Activated T-helper 1 cell treated with anti-CD3 and anti-CD28 coated beads, Interleukin-12 subunit alpha, Interleukin-12 subunit beta, Interleukin-2, Interleukin-4 antibody, amounts not matched to agents 30 ng/mL and 10 ng/mL and 1 ng/mL, durations not matched to agents 14 hours and 24 hours and 36 hours (primary cell): ENCODE measurements at regions of chr9 and their contacts with region 1.

Region 1: DNA sequence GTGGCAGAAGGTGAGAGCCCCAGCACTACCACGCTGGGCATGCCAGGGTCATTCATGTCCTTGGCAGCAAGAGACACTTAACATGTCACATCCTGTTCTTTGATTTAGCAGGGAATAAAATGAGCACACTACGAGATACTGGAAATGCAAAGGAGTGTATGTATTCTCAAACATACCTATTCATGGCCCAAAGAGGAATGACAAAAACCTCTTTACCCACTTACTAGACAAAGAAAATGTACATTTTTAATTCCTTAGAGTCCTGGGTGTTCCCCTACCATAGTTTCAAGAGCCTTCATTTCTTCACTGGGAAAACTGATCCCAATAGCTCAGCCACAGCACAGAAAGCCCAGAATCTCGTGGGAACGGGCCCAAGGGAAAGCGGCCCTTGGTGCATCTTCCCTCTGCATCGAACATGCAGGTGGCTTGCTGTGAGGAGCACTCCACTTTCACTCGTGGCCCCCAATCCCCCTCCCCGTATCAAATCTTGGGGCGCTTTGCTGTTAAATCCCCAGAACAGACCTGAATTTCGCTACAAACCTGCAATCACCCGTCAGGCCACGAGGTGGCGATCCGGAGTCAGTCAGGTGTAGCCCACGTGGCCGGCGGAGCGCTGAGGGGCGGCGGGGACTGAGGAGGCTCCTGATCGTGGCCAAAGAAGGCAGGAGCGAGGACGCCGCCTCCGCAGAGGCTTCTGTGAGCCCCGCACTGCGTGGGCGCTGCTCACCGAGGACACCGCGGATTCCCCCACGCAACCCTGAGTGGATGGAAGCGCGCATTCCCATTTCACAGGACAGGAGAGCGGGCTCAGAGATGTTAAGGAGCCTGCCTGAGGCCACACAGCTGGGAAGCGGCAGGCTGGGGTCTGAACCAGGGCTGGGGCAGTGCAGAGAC is 91.4 kb downstream of the LMX1B start:
- DNase-seq: peak; percentile 77
- H3K4me3 Mint-ChIP-seq: peak overlapping the region; percentile 47
- H3K27ac Mint-ChIP-seq: no peak overlapping the region
- H3K4me1 Mint-ChIP-seq: peaks cover 15% of the 10 kb centered on the region
- H3K27me3 Mint-ChIP-seq: peaks cover 10% of the 10 kb centered on the region

Region 2: DNA sequence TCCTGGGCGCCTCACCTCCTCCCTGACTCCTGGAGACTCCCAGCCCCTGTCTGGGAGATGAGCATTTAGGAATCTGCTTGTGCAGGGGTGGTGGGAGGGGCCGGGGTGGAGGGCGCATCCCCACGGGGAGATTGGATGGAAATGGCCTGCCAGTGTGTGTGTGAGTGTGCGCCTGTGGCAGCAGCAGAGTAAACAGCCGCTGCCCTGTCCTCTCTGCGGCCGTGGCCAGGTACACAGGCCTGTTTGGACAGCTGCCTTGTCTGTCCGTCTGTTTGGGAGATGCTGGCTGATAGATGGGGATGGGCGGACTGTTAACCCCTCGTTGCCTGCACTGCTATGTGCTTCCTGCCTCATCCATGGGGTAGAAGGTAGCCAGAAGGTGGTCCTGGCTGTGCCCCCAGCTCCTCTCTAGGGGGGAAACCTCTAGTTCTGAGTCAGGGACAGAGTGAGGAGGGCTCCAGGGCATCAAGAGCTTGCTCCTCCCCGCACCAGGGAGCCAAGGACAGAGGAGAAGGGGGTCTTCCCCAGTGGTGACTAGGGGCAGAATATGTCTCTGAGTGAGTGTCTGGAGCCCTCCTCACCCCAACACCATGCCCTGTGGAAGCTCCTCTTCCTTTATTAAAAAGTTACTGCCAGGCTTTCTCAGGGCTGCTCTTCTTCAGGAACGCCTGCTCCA is 31.3 kb before region 1 on chr9:
- intact Hi-C with region 1: no loop called
- DNase-seq: no peak
- H3K4me3 Mint-ChIP-seq: no peak overlapping the region
- H3K27ac Mint-ChIP-seq: no peak overlapping the region
- H3K4me1 Mint-ChIP-seq: peaks cover 5% of the 10 kb centered on the region
- H3K27me3 Mint-ChIP-seq: peaks cover 54% of the 10 kb centered on the region

Region 3: DNA sequence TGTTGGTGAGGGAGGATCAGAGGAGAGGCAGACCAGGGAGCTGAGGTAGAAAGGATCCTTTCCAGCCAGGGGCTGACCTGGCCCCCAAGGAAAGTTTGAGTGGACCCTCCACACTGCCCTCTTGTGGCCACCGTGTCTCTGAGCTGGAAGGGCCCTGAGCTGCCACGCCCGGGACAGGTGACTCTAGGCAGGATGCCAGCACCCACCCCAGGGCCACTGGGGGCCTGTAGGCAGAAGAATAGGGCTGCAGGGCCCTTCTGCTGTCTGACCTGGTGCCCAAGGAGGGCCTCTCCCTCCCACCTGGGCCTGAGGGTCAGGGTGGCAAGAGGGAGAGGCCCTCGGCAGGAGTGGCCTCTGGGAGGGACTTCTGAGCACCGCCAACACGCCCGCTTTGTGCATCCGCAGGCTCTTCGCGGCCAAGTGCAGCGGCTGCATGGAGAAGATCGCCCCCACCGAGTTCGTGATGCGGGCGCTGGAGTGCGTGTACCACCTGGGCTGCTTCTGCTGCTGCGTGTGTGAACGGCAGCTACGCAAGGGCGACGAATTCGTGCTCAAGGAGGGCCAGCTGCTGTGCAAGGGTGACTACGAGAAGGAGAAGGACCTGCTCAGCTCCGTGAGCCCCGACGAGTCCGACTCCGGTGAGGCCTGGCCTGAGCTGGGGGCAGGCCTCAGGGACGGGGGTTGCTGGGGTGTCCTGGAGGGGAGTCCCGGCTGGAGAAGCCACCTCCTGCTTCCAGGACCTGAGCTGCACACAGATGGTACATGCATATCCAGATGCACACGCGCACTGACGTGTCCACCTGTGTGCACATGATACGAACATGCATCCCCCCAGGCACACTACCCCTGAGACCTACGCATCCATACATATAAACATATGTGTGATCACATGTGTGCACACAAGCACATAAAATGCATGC is 14.4 kb before region 1 on chr9:
- intact Hi-C with region 1: no loop called
- DNase-seq: peak; percentile 26
- H3K4me3 Mint-ChIP-seq: no peak overlapping the region
- H3K27ac Mint-ChIP-seq: no peak overlapping the region
- H3K4me1 Mint-ChIP-seq: no peaks in the 10 kb centered on the region
- H3K27me3 Mint-ChIP-seq: peaks cover 10% of the 10 kb centered on the region

Region 4: GRCh38 chr9:126722252-126723078 is 17.3 kb after region 1 on chr9:
- intact Hi-C with region 1: loop called (anchors 1 kb)
- DNase-seq: peak; percentile 80
- H3K4me3 Mint-ChIP-seq: peak overlapping the region; percentile 88
- H3K27ac Mint-ChIP-seq: peak overlapping the region; percentile 74
- H3K4me1 Mint-ChIP-seq: peaks cover 35% of the 10 kb centered on the region
- H3K27me3 Mint-ChIP-seq: peaks cover 10% of the 10 kb centered on the region

Region 5: GRCh38 chr9:126745574-126746411 is 40.7 kb after region 1 on chr9:
- intact Hi-C with region 1: loop called (anchors 2 kb)
- DNase-seq: no peak
- H3K4me3 Mint-ChIP-seq: no peak overlapping the region
- H3K27ac Mint-ChIP-seq: peak overlapping the region; percentile 57
- H3K4me1 Mint-ChIP-seq: peaks cover 38% of the 10 kb centered on the region
- H3K27me3 Mint-ChIP-seq: peaks cover 16% of the 10 kb centered on the region

Region 6: GRCh38 chr9:126781186-126782052 is 76.3 kb after region 1 on chr9:
- intact Hi-C with region 1: loop called (anchors 1 kb)
- DNase-seq: peak; percentile 66
- H3K4me3 Mint-ChIP-seq: no peak overlapping the region
- H3K27ac Mint-ChIP-seq: no peak overlapping the region
- H3K4me1 Mint-ChIP-seq: no peaks in the 10 kb centered on the region
- H3K27me3 Mint-ChIP-seq: peaks cover 9% of the 10 kb centered on the region

Region 7: DNA sequence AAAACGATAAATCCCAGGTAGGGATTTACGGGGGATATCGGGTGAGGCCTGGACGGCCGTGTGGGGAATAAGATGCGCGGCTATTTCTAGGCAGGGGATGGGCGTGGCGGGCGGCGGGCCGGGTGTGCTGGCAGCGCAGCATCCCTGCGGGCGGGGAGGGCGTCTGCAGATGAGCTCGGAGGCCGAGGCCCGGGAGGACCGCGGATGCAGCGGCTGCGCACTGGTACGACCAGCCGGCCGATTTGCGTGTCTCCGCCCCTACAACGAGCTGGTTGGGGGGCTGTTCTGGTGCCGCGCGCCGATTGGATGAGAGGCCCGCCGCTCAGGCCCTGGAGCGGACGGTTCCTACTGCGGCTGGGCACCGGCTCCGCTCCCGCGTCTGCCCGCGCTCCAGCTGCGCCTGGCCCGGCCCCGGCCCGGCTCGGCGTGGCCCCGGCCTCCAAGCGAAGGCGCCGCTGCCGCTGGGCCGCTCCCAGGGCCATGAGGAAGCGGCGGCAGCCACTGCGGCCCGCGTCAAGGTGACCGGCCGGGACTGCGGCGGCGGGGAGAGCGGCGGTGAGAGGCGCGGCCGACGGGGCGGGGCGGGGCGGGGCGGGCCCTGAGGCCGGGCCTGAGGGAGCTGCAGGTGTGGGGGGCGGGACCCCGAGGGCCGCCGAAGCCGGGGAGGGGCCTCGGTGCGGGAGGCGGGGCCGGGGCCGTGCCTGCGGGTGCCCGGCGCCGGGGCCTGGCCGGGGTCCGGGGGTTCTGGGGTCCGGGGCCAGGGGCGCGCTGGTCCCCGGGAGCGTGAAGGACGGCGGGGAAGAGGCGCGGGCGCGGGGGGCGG is 209.5 kb after region 1 on chr9 and contains the start of gene RALGPS1:
- intact Hi-C with region 1: loop called (anchors 1 kb)
- DNase-seq: peak; percentile 91
- H3K4me3 Mint-ChIP-seq: peak within 1 kb of the TSS; percentile 73
- H3K27ac Mint-ChIP-seq: no peak within 1 kb of the TSS
- H3K4me1 Mint-ChIP-seq: peaks cover 6% of the 10 kb centered on the region
- H3K27me3 Mint-ChIP-seq: peaks cover 17% of the 10 kb centered on the region
- total RNA-seq, gene RALGPS1: 1.4 and 1.8 TPM in 2 replicates